HAP-1 (cell line): ENCODE measurements at regions of chr5 and their contacts with region 1.

Region 1: GRCh38 chr5:54249210-54250028 is 61.0 kb downstream of the ARL15 start:
- DNase-seq: peak in 1 of 2 experiments; percentile 47
- H3K4me3 ChIP-seq: no peak overlapping the region
- H3K4me1 ChIP-seq: no peaks in the 10 kb centered on the region
- H3K27me3 ChIP-seq: no peaks in the 10 kb centered on the region

Region 2: DNA sequence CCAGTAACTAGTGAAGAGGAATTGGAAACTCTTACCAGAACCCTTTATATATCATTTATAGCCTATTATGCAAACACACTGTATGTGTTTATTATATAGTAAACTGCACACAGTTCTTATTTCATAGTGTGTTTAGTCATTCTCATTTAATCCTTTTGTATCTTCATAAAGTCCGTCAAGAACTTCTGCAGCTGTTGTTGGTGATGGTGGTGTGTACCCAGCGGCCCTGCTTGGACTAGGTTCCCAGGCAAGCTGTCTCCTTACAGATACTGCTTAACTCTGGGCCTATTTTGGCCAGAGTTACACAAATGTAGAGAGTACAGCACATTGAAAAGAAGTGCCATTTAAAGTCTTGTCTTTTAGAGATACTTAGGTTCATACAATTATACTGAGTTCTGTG is 457.1 kb before region 1 on chr5:
- in situ Hi-C with region 1: no loop called
- DNase-seq: no peak
- H3K4me3 ChIP-seq: no peak overlapping the region
- H3K4me1 ChIP-seq: no peaks in the 10 kb centered on the region
- H3K27me3 ChIP-seq: no peaks in the 10 kb centered on the region; the same call in 1 of the 2 replicates

Region 3: GRCh38 chr5:54457094-54457862 is 207.9 kb after region 1 on chr5:
- in situ Hi-C with region 1: no loop called
- DNase-seq: peak; percentile 67 to 78
- H3K4me3 ChIP-seq: no peak overlapping the region
- H3K4me1 ChIP-seq: peaks cover 25% of the 10 kb centered on the region
- H3K27me3 ChIP-seq: no peaks in the 10 kb centered on the region

Region 4: GRCh38 chr5:54492178-54492577 is 242.8 kb after region 1 on chr5:
- in situ Hi-C with region 1: loop called (anchors 10 kb)
- DNase-seq: no peak
- H3K4me3 ChIP-seq: no peak overlapping the region
- H3K4me1 ChIP-seq: no peaks in the 10 kb centered on the region
- H3K27me3 ChIP-seq: peaks cover 3% of the 10 kb centered on the region; the same call in 1 of the 2 replicates

Region 5: DNA sequence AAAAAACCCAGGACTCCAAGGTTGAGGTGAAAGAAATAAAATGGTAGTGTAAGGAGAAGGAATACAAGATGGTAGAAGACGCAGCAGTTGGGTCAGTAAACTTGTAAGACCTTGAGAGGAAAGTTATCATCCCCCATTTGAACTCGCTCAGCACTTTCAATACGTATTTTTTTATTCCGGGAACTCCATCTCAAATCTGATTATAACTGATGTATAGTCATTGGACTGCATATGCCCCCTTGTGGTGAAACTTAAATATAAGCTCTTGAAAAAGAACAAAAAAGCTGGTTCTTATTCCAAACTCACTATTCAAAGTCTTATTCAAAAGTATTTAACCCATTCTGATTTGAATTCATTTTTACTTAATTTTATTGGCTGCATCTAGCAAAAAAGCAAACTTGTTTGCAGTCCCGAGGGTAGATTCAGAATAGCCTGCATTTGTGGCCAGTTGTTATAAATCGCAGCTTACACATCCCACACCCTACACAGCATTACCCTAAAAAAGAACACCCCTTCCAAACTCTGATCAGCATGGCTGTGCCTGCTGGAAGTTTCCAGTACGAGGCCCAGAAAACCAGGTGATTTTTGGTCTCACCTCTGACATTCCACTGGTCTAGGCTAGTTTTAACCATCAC is 618.0 kb after region 1 on chr5:
- in situ Hi-C with region 1: loop called (anchors 25 kb)
- DNase-seq: peak in 1 of 2 experiments; percentile 51
- H3K4me3 ChIP-seq: no peak overlapping the region
- H3K4me1 ChIP-seq: no peaks in the 10 kb centered on the region
- H3K27me3 ChIP-seq: peaks cover 8% of the 10 kb centered on the region